ENCODE measurements at regions of chr16 and their contacts with region 1.

Region 1: DNA sequence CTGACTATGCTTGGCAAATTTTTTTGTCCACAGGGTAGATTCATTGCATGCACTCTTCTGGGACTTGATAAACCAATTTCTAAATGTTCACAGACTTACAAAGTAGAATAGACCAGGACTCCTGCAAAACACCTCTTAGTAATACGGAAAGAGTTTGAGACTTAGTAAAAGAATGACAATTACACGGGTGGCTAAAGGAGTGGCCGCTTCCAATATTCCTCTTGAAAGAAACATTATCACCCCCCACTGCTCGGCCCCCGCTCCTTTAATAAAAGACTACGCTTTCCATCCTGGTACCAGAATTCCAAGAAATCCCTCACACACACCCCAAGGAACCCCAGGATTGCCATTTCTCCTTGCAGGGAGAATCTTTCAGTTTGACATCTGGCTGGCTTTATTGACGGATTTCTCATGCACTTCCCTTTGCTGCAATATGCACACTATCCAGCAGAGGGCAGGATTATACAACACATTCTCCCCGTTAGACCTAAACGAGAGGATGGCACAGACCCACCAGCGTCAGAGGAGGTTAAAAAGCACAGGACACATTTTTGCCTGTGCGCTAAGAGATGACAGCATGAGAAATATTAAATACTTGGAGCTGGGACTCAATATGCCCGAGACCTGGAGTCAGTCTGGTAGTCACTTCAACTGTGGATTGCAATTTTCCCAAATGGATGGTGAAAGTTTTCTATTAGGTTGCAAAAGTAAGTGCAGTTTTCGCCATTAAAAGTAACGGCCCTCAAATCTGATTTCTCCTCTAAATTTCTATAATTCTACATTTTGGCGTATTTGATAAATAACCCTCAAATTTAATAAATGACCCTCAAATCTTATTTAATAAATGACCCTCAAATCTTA is 46.6 kb upstream of the NUDT7 start:
- DNase-seq: peak; percentile 20 to 77 (median 46)
- ATAC-seq: peak; percentile 68
- H3K4me3 ChIP-seq: no peak overlapping the region
- H3K4me3 Mint-ChIP-seq: no peak overlapping the region
- H3K27ac ChIP-seq: no peak overlapping the region
- H3K27ac Mint-ChIP-seq: no peak overlapping the region
- H3K4me1 ChIP-seq: no peaks in the 10 kb centered on the region
- H3K4me1 Mint-ChIP-seq: no peaks in the 10 kb centered on the region
- H3K27me3 ChIP-seq: peaks cover 0 to 10% of the 10 kb centered on the region in 2 experiments
- H3K27me3 Mint-ChIP-seq: peaks cover 10% of the 10 kb centered on the region
- CTCF ChIP-seq: peak; percentile 92

Region 2: DNA sequence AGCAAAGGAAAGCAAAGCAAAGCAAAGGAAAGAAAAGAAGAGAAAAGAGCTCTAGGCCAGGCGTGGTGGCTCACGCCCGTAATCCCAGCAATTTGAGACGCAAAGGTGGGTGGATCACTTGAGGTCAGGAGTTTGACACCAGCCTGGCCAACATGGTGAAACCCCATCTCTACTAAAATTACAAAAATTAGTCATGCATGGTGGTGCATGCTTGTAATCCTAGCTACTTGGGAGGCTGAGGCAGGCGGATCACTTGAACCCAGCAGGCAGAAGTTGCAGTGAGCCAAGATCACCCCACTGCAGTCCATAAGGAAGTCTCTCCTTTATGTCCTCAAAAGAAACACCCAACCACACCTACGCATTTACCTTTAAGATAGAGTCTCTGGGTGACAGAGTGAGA is 310.9 kb before region 1 on chr16:
- CTCF ChIA-PET with region 1: no interaction called
- POLR2A ChIA-PET with region 1: no interaction called
- intact Hi-C with region 1: no loop called
- DNase-seq: no peak
- ATAC-seq: no peak
- H3K4me3 ChIP-seq: no peak overlapping the region
- H3K4me3 Mint-ChIP-seq: no peak overlapping the region
- H3K27ac ChIP-seq: no peak overlapping the region
- H3K27ac Mint-ChIP-seq: no peak overlapping the region
- H3K4me1 ChIP-seq: no peaks in the 10 kb centered on the region
- H3K4me1 Mint-ChIP-seq: no peaks in the 10 kb centered on the region
- H3K27me3 ChIP-seq: peaks cover 0 to 2% of the 10 kb centered on the region in 2 experiments
- H3K27me3 Mint-ChIP-seq: peaks cover 6% of the 10 kb centered on the region
- CTCF ChIP-seq: no peak

Region 3: GRCh38 chr16:77647726-77648125 is 28.0 kb before region 1 on chr16:
- CTCF ChIA-PET with region 1: no interaction called
- POLR2A ChIA-PET with region 1: no interaction called
- intact Hi-C with region 1: no loop called
- DNase-seq: no peak
- ATAC-seq: no peak
- H3K4me3 ChIP-seq: no peak overlapping the region
- H3K4me3 Mint-ChIP-seq: no peak overlapping the region
- H3K27ac ChIP-seq: no peak overlapping the region
- H3K27ac Mint-ChIP-seq: no peak overlapping the region
- H3K4me1 ChIP-seq: no peaks in the 10 kb centered on the region
- H3K4me1 Mint-ChIP-seq: no peaks in the 10 kb centered on the region
- H3K27me3 ChIP-seq: no peaks in the 10 kb centered on the region
- H3K27me3 Mint-ChIP-seq: peaks cover 8% of the 10 kb centered on the region
- CTCF ChIP-seq: no peak

Region 4: DNA sequence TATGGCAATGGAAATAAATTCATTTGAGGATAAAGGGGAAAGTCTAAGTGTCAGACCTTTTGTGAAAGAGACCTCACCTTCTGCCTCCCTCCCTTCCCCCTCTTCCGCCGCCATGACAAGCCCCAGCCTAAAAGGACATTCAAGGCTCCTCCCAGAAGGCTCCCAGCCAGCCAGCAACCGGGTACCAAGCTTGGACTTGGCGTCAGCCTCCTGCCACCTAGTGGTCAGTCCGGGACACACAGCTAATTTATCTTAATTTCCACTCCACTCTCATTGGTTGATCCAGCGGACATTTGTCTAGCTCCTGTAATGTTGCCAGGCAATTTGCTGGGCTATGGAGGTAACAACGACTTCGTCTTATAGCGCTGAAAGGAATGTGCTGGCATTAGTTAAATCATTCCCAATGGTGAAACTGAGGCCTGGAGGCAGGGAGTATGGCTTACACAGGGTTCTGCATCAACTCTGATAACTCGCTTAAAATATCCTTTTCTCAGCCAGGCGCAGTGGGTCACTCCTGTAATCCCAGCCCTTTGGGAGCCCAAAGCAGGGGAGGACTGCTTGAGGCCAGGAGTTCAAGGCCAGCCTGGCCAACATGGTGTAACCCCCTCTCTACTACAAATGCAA is 327.3 kb after region 1 on chr16:
- CTCF ChIA-PET with region 1: interaction called, 5 read pairs
- POLR2A ChIA-PET with region 1: no interaction called
- intact Hi-C with region 1: loop called (anchors 1 kb)
- DNase-seq: peak; percentile 24 to 78 (median 45)
- ATAC-seq: peak; percentile 67
- H3K4me3 ChIP-seq: no peak overlapping the region
- H3K4me3 Mint-ChIP-seq: no peak overlapping the region
- H3K27ac ChIP-seq: no peak overlapping the region
- H3K27ac Mint-ChIP-seq: no peak overlapping the region
- H3K4me1 ChIP-seq: peaks cover 4% of the 10 kb centered on the region
- H3K4me1 Mint-ChIP-seq: no peaks in the 10 kb centered on the region
- H3K27me3 ChIP-seq: peaks cover 6 to 11% of the 10 kb centered on the region in 2 experiments
- H3K27me3 Mint-ChIP-seq: peaks cover 30% of the 10 kb centered on the region
- CTCF ChIP-seq: peak; percentile 77